ENCODE measurements at regions of chr2 and their contacts with region 1.

Region 1: GRCh38 chr2:38508311-38509039 is 94.3 kb downstream of the HNRNPLL start:
- DNase-seq: peak; percentile 46
- ATAC-seq: peak; percentile 79
- H3K4me3 Mint-ChIP-seq: no peak overlapping the region
- H3K27ac Mint-ChIP-seq: no peak overlapping the region
- H3K4me1 Mint-ChIP-seq: peaks cover 4% of the 10 kb centered on the region
- H3K27me3 Mint-ChIP-seq: no peaks in the 10 kb centered on the region
- CTCF ChIP-seq: no peak

Region 2: DNA sequence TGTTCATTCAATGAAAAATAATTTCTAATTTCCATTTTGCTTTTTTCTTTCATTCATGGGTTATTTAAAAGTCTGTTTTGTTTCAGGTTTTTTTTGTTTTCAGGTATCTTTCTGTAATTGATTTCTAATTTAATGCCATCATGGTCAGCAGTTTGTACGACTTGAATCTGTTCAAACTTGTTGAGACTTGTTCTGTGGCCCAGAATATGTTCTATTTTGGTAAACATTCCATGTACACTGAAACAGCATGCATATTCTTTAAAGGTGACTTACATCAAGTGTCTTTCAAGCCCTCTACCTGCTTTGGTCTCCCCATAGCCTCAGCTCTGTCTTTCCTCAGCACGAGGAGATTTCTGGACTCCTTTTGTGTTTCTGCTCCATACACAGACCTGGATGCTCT is 481.6 kb before region 1 on chr2:
- CTCF ChIA-PET with region 1: no interaction called
- POLR2A ChIA-PET with region 1: no interaction called
- intact Hi-C with region 1: no loop called
- DNase-seq: no peak
- ATAC-seq: no peak
- H3K4me3 Mint-ChIP-seq: no peak overlapping the region
- H3K27ac Mint-ChIP-seq: no peak overlapping the region
- H3K4me1 Mint-ChIP-seq: no peaks in the 10 kb centered on the region
- H3K27me3 Mint-ChIP-seq: peaks cover 6% of the 10 kb centered on the region
- CTCF ChIP-seq: no peak

Region 3: DNA sequence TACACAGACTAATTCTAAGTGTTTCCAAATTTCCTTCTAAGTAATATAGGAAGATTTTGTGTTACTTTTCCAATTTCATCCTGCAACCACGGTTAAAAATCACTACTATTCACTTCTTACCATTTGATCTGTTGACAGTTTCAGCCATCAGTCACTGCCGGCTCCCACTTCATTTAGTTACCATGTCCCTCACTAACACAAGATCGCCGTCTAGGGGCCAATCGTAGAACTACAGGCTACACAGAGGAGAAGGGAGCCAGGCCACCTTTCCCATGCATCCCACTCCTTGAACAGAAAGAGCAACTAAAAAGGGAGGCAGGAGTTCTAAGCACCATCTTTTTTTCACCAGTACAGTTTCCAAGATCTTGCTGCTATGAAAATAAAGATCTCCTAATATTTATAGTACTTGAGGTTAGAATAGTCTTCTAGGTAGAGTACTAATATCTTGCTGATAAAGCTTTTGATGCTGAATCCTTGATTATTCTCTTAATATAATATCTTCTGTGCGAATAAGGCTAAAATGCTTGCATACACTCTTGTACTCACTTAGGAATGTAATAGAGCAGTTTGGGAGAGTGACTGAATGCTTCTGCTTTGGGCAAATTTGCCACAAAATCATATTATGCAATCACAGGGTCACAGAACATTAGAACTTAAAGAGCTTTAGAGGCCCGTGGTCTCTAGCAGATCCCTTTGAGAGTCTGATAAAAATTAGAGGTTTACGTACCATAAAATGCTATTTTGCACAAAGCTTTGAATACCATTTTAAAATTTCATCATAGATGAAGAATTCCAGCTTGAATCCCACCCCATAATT is 393.1 kb before region 1 on chr2:
- CTCF ChIA-PET with region 1: interaction called, 8 read pairs
- POLR2A ChIA-PET with region 1: no interaction called
- intact Hi-C with region 1: loop called (anchors 1 kb)
- DNase-seq: peak; percentile 56
- ATAC-seq: peak; percentile 77
- H3K4me3 Mint-ChIP-seq: no peak overlapping the region
- H3K27ac Mint-ChIP-seq: no peak overlapping the region
- H3K4me1 Mint-ChIP-seq: peaks cover 3% of the 10 kb centered on the region
- H3K27me3 Mint-ChIP-seq: peaks cover 31% of the 10 kb centered on the region
- CTCF ChIP-seq: peak; percentile 69

Region 4: GRCh38 chr2:38315707-38316333 is 192.7 kb before region 1 on chr2:
- CTCF ChIA-PET with region 1: interaction called, 144 read pairs
- POLR2A ChIA-PET with region 1: no interaction called
- intact Hi-C with region 1: loop called (anchors 1 kb)
- DNase-seq: no peak
- ATAC-seq: peak; percentile 28
- H3K4me3 Mint-ChIP-seq: no peak overlapping the region
- H3K27ac Mint-ChIP-seq: no peak overlapping the region
- H3K4me1 Mint-ChIP-seq: no peaks in the 10 kb centered on the region
- H3K27me3 Mint-ChIP-seq: no peaks in the 10 kb centered on the region
- CTCF ChIP-seq: peak; percentile 40

Region 5: DNA sequence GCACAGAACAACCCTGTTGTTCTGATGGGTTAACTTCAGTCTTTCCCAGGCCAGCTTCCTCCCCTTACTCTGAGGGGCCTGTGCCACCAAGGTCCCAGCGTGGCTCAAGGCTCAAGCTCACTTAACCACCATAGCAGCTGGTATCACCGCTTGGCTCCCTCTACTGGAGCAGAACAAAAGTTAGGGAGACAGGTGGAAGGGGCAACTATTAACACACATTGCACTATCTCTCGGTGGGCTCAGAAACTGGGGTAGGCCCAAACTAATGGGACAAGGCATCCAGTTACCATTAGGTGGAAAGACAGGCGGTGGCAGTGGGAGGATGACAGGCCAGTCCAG is 42.7 kb before region 1 on chr2:
- CTCF ChIA-PET with region 1: interaction called, 14 read pairs
- POLR2A ChIA-PET with region 1: no interaction called
- intact Hi-C with region 1: loop called (anchors 2 kb)
- DNase-seq: no peak
- ATAC-seq: no peak
- H3K4me3 Mint-ChIP-seq: no peak overlapping the region
- H3K27ac Mint-ChIP-seq: no peak overlapping the region
- H3K4me1 Mint-ChIP-seq: no peaks in the 10 kb centered on the region
- H3K27me3 Mint-ChIP-seq: peaks cover 5% of the 10 kb centered on the region
- CTCF ChIP-seq: no peak

Region 6: GRCh38 chr2:38498045-38498481 is 10.4 kb before region 1 on chr2:
- CTCF ChIA-PET with region 1: interaction called, 23 read pairs
- POLR2A ChIA-PET with region 1: no interaction called
- intact Hi-C with region 1: no loop called
- DNase-seq: peak; percentile 21
- ATAC-seq: peak; percentile 98
- H3K4me3 Mint-ChIP-seq: peak overlapping the region; percentile 63
- H3K27ac Mint-ChIP-seq: peak overlapping the region; percentile 74
- H3K4me1 Mint-ChIP-seq: peaks cover 11% of the 10 kb centered on the region
- H3K27me3 Mint-ChIP-seq: peaks cover 5% of the 10 kb centered on the region
- CTCF ChIP-seq: no peak

Measured in activated B cell treated with CpG ODN at 0.5 μM for 24 hours (primary cell).